GM10248 (cell line): ENCODE measurements at regions of chr1 and their contacts with region 1.

Region 1: DNA sequence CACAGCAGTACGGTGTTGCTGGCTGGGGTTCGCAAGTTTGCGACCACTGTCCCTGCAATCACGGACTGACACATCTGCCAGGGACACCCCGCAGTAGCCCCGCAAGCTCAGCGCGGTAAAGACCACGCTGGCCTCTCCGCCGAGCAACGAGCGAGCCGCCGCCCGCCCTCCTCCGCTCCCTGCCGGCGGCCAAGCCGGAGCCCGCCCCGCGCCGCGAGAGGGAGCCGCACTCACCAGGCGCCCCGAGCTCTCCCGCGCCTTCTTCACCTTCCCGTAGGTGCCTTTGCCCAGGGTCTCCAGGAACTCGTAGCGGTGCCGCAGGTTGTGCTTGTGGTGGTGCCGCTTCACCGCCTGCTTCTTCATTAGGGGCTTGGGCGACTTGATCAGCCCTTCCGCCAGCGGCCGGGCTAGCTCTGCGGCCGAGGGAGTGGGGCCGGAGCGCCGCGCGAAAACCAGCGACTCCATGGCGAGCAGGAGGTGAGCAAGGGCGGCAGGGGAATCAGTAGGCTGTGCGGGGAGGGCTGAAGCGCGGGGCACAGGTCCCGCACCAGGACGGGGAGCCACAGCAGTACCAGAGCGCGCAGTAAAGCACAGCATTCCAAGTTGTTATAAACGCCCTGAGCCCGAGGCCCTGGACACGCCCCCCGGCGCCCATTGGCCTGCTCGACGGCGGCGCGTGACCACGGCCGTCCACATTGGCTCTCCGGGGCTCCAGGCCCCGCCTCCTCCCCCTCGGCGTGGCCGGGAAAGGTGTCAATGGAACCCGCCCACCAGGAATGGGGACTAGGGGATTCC is at the start of gene NUAK2:
- DNase-seq: peak; percentile 70
- CTCF ChIP-seq: peak; percentile 55

Region 2: DNA sequence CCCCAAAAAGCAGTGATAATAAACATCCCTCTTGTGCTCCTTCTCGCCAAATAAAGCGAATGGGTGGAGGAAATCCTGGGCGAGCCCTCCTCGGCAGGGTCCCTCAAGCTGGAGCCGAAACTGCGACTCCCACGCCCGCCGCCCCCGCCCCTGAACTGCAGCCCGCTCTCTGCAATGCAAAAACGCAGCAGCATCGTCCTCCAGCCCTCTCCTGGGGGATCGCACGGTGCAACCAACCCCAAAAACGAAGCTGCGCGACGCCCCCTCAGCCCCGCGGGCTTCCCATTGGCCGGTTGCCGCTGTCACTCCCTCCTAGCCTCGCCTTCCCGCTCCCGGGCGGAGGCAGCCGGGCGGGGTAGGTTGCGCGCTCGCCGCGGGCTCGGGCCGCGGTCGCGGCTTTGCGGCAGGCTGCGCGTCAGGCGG is 93.8 kb before region 1 on chr1 and contains the start of gene TMCC2:
- CTCF ChIA-PET with region 1: interaction called, 23 read pairs
- POLR2A ChIA-PET with region 1: no interaction called
- DNase-seq: peak; percentile 94
- CTCF ChIP-seq: no peak

Region 3: GRCh38 chr1:205273551-205273982 is 47.8 kb before region 1 on chr1:
- CTCF ChIA-PET with region 1: interaction called, 1,591 read pairs
- POLR2A ChIA-PET with region 1: interaction called, 4 read pairs
- DNase-seq: peak; percentile 90
- CTCF ChIP-seq: peak; percentile 91

Region 4: DNA sequence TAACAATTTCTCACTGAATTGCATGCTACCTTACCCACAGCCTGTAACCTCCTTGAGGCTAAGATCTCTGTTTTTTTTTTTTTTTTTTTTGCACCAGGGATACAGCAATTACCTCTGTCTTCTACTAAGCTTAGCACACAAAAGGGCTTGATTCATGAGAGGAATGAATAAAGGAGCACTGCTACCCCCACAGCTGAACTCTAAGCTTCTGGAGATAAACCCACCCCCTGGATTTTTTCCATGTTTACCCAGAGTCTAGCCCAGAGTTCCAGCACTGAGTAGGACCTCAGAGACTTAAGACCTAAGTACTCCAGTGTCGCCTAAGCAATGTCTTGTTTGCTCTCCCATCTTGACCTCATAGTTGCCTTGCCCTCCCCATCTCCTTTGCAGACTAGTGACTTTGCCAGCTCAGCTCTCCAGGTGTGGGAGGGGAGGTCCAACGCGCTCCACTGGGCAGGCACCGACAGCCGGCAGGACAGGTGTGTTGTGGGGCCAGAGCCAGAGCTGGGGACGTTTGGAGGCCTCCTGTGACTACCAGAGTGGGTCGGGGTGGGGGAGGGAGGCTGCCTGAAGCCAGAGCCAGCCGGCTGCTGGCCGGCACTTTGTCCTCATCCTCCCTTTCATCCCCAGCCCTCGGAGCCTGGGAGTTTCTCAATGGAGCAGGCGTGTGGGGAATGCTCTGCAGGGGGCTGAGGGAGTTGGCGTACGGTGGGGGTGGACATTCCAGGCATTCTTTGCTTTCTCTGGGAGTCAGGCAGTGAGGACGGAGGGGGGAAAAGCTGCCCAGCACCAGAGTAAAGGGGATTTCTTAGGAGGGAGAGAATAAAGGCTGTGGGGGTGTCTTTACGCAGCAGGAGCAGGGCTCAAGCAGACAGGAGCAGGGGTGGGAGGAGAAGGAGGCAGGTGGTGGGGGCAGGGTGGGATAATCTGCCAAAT is 20.2 kb before region 1 on chr1:
- CTCF ChIA-PET with region 1: interaction called, 23 read pairs
- POLR2A ChIA-PET with region 1: no interaction called
- DNase-seq: no peak
- CTCF ChIP-seq: no peak

Region 5: DNA sequence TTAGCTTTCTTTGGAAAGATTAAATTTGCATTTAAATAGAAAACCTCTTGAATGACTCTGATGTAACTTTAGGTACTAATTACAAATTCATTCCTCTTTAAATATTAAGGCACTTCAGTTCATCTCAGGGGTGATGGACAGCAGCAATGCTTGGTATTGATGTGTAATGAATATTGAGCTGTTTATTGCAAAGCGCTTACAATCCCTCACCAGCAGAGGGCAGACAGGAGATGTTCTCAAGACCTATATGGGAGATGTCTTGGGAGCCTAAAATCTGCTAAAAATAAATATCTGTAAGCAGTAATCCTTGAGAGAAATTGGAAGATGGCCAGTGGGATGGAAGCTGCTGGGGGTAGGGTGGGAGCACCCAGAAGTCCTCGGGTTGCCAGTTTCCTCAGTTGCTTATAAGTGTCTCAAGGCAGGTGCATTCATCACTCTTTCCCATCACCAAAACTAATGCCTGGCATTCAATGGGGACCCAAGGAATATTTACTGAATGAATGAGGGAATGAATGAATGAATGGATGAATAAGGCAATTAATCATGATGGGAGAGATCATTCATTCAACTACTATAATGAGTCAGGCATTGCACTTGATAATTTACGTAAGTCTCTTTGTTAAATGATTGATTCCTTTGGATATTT is 33.0 kb after region 1 on chr1:
- CTCF ChIA-PET with region 1: interaction called, 18 read pairs
- POLR2A ChIA-PET with region 1: no interaction called
- DNase-seq: peak; percentile 60
- CTCF ChIP-seq: peak; percentile 87